KBM-7 (cell line): ENCODE measurements at regions of chr12 and their contacts with region 1.

Region 1: GRCh38 chr12:117836999-117837736 is 131.6 kb downstream of the KSR2 start:
- DNase-seq: peak; percentile 70

Region 2: DNA sequence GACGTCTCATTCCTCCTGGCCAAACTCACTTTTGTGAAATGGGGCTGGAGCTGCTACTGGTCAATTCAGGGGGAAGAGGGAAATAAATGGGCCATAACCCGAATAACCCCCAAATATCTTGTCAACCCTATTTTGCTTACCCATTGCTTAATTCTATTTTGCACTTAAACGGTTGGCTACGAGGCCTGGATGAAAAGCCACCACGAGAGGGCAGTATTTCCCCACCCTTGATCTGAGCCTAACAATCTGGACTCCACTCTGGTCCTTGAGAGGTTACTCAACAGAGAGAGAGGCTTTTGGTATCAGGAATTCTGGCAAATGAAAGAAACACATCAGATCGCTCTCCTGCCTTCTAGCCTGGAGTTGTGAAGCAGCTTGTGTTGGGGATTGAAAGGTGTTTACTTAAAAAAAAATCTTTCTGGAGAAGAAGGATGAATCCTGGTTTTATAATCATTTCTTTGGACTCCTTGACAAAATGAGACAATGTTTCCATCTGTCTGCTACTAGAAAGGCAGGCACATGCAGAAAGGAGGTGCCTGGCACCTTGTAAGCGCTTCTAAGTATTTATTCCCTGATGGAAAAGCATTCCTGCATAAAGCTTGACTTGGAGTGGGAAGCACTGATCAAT is 624.5 kb before region 1 on chr12:
- in situ Hi-C with region 1: loop called (anchors 25 kb)
- DNase-seq: peak; percentile 77

Region 3: DNA sequence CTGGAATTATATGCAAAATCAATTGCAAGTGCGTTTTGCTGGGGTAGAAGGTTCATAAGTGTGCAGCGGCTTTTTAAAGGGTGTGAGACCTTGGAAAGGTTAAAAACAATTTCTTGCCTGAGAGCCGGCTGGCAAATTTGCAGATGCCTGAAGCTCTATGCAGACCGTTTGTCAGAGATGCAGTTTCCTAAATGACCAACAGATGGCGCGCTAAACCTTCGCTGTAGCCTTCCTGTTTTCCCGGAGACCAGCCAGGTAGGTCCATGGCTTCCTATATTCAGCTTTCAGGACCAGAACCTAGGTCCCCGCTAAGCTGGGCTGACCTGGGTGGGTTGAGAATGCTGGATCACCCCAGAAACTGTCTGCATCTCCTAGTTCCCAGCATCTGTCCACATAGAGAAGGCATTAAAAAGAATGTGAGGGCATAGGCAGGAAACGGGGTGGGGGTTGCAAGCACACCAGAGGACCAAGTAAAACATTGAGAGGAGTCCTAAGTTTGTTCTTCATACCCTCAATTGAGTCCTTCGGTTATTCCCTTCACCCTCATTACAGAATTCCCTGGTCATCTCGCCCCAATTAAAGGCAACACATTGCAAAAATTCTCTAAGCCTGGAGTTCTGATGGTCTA is 470.0 kb before region 1 on chr12:
- in situ Hi-C with region 1: loop called (anchors 25 kb)
- DNase-seq: peak; percentile 71

Region 4: DNA sequence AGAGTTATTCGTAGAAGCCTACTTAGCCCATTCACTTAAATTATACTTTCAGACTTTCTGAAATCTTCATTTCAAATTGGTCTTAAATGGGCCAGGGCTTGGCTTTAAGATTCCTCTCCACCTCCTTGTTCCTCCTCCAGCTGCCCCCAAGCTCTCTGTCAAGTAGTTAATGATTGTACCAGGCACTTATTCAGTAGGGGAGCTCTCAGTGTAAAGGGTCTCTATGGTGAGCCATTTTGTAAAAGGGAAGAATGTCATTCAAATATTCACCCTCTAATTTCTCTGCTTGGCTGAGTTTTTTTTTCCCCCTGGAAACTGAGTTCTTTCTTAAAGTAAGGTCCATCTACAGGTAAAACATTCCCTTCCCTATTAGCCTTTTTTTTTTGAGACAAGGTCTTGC is 635.8 kb after region 1 on chr12:
- in situ Hi-C with region 1: no loop called
- DNase-seq: no peak